ENCODE measurements at regions of chr1 and their contacts with region 1.

Region 1: GRCh38 chr1:154335025-154335714 is 9.8 kb downstream of the ATP8B2 start:
- DNase-seq: peak; percentile 88
- H3K4me3 ChIP-seq: peak overlapping the region in 1 of 2 experiments; percentile 10; a peak in 1 of 4 replicates
- H3K27ac ChIP-seq: peak overlapping the region; percentile 25 to 47; a peak in 3 of 4 replicates
- H3K4me1 ChIP-seq: peaks cover 0 to 7% of the 10 kb centered on the region in 2 experiments; a peak in 2 of 4 replicates
- H3K27me3 ChIP-seq: no peaks in the 10 kb centered on the region
- CTCF ChIP-seq: peak; percentile 92
- EP300 ChIP-seq: no peak
- RAD21 ChIP-seq: peak; percentile 77

Region 2: DNA sequence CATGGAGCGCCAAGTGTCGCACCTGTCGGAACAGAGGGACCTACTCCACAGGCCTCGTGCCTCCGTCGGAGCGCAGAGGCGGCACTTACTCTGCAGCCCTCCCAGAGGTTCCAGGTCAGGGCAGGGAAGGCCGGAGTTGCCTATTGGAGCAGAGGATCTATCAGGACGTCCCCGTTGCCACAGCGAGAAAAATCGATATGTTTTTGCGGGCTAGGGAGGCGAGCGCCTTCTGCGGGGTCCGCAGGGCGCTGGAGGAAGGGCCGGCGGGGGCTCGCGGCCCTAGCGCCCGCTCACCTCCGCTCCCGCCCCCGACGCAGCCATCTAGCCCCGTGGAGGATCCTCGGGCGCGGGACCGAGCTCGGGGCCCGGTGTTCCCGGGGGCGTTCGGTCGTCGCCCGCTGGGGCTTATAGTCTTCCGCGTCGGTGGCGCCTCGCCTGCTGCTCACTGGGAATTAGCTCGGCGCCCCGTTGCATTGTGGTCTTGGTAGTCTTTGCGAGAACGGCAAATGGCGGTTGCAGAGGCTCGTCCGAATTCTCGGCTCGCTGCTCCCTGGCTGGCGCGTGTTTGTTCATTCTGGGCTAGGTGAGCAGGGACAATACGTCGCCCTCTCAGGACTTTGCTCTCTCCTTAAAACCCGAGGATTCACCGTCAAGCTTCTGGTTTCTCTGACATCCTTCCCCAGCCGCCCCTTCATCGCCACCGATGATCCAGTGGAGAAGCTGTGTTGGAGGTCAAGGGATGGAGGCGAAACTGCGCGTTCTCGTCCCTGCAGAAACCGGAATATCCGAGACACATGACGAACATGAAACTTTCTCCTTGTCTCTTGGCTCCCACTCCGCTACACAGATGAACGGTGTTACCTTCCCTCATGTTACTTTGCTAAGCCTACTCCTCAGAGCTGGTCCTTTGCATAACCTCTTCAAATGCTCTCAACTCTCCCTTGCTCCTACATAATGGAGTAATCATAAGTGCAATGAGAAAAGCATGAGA is 357.6 kb before region 1 on chr1 and contains the start of gene JTB:
- CTCF ChIA-PET with region 1: no interaction called
- POLR2A ChIA-PET with region 1: no interaction called
- DNase-seq: peak; percentile 89
- H3K4me3 ChIP-seq: peak within 1 kb of the TSS; percentile 92 to 95
- H3K27ac ChIP-seq: peak within 1 kb of the TSS; percentile 63 to 91; a peak in 3 of 4 replicates
- H3K4me1 ChIP-seq: peaks cover 5 to 16% of the 10 kb centered on the region in 2 experiments; a peak in 2 of 4 replicates
- H3K27me3 ChIP-seq: no peaks in the 10 kb centered on the region
- CTCF ChIP-seq: no peak
- EP300 ChIP-seq: no peak
- RAD21 ChIP-seq: no peak
- polyA plus RNA-seq, gene JTB: 118 and 122 TPM in 2 replicates

Region 3: GRCh38 chr1:154198756-154199562 is 136.2 kb before region 1 on chr1:
- CTCF ChIA-PET with region 1: interaction called, 38 read pairs
- POLR2A ChIA-PET with region 1: no interaction called
- DNase-seq: peak; percentile 78
- H3K4me3 ChIP-seq: no peak overlapping the region
- H3K27ac ChIP-seq: no peak overlapping the region
- H3K4me1 ChIP-seq: peaks cover 0 to 2% of the 10 kb centered on the region in 2 experiments; a peak in 1 of 4 replicates
- H3K27me3 ChIP-seq: no peaks in the 10 kb centered on the region
- CTCF ChIP-seq: peak; percentile 64
- EP300 ChIP-seq: no peak
- RAD21 ChIP-seq: peak; percentile 70

Region 4: GRCh38 chr1:154272217-154272998 is 62.8 kb before region 1 on chr1 and contains the start of gene HAX1:
- CTCF ChIA-PET with region 1: interaction called, 47 read pairs
- POLR2A ChIA-PET with region 1: interaction called, 4 read pairs
- DNase-seq: peak; percentile 89
- H3K4me3 ChIP-seq: peak within 1 kb of the TSS; percentile 89 to 91
- H3K27ac ChIP-seq: peak within 1 kb of the TSS; percentile 71 to 89
- H3K4me1 ChIP-seq: peaks cover 0 to 9% of the 10 kb centered on the region in 2 experiments; a peak in 1 of 4 replicates
- H3K27me3 ChIP-seq: no peaks in the 10 kb centered on the region
- CTCF ChIP-seq: peak; percentile 97
- EP300 ChIP-seq: 0 out of 4 replicates have a peak, but pooled peaks of 1 of the 2 experiments have one; percentile 2
- RAD21 ChIP-seq: peak; percentile 79
- polyA plus RNA-seq, gene HAX1: 74.1 and 106 TPM in 2 replicates

Region 5: DNA sequence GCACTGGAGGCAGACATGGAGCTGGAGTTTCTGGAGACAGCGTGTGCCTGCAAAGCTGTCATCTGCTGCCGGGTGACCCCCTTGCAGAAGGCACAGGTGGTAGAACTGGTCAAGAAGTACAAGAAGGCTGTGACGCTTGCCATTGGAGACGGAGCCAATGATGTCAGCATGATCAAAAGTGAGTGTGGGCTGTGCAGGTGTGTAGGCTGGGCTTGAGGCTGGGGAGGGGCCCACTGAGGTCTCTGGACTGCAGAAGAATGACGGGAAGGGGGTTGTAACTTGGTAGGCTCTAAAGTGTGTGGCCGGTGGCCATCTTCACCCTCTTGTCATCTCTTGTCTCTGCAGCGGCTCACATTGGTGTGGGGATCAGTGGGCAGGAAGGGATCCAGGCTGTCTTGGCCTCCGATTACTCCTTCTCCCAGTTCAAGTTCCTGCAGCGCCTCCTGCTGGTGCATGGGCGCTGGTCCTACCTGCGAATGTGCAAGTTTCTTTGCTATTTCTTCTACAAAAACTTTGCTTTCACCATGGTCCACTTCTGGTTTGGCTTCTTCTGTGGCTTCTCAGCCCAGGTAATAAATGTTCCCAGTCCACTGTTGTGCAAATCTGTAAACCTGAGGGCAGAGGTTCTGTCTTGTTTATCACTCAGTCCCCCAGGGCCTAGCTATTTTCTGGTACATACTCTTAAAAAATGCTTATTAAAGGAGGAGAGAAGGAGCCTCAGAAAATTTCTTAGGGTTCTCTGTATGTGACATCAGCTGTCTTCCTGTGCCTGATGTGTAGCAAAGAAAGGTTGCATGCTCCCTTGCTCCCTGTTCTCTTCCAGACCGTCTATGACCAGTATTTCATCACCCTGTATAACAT is 10.0 kb after region 1 on chr1:
- CTCF ChIA-PET with region 1: interaction called, 58 read pairs
- POLR2A ChIA-PET with region 1: interaction called, 3 read pairs
- DNase-seq: peak; percentile 60
- H3K4me3 ChIP-seq: no peak overlapping the region
- H3K27ac ChIP-seq: no peak overlapping the region
- H3K4me1 ChIP-seq: no peaks in the 10 kb centered on the region
- H3K27me3 ChIP-seq: no peaks in the 10 kb centered on the region
- CTCF ChIP-seq: peak; percentile 71
- EP300 ChIP-seq: no peak
- RAD21 ChIP-seq: peak; percentile 36

Region 6: DNA sequence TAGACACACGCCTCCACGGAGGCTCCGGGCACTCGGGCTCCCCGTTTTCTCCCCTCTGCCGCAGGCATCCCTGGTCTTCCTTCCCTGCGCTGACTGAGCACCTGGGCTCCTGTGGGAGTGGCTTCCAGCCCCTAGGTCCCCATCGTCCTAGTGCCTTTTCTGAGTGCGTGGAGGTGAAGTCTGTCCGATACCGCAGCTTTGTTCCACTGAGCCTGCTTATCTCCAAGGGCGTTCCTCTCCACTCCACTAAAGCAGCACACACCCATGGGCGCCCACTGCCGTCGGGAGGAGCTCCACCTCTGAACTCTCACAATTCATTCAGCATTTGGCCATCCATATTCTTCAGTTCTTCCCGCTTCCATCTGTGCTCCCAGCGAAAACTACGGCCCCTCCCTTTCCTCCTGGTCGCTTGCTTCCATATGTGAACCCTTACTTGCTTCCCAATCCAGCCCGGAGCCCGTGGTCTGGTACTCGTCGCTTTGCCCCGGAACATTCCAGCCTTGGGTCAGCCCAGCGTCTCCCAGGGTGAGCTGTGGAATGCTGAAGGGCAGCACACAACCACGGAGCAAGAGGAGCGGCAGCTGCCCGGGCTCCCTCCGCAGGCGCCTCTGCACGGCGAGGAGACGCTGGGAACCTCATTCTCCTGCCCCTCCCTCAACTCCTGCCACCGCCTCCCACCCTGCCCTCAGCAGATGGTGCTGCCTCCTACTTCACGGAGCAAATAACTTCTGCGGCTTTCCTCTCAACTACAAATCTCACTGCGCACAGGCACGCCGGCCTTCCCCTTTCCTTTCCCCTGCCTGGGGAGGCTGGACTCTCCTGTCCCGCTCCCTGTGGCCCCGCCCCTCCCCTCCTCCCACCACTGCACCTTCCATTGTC is 17.6 kb after region 1 on chr1:
- CTCF ChIA-PET with region 1: interaction called, 53 read pairs
- POLR2A ChIA-PET with region 1: interaction called, 3 read pairs
- DNase-seq: peak; percentile 63
- H3K4me3 ChIP-seq: peak overlapping the region; percentile 35 to 39
- H3K27ac ChIP-seq: no peak overlapping the region
- H3K4me1 ChIP-seq: peaks cover 7 to 10% of the 10 kb centered on the region in 2 experiments; a peak in 1 of 4 replicates
- H3K27me3 ChIP-seq: no peaks in the 10 kb centered on the region
- CTCF ChIP-seq: no peak
- EP300 ChIP-seq: no peak
- RAD21 ChIP-seq: no peak

Region 7: GRCh38 chr1:154361357-154361756 is 26.2 kb after region 1 on chr1:
- CTCF ChIA-PET with region 1: interaction called, 12 read pairs
- POLR2A ChIA-PET with region 1: no interaction called
- DNase-seq: no peak
- H3K4me3 ChIP-seq: no peak overlapping the region
- H3K27ac ChIP-seq: no peak overlapping the region
- H3K4me1 ChIP-seq: no peaks in the 10 kb centered on the region
- H3K27me3 ChIP-seq: no peaks in the 10 kb centered on the region
- CTCF ChIP-seq: no peak
- EP300 ChIP-seq: no peak
- RAD21 ChIP-seq: no peak

Measured in SK-N-SH (cell line).